ENCODE measurements at regions of chr7 and their contacts with region 1.

Region 1: GRCh38 chr7:69598081-69598486 is at the start of gene AUTS2:
- DNase-seq: peak; percentile 93 to 96 (median 94)
- H3K4me3 ChIP-seq: peak within 1 kb of the TSS; percentile 81
- H3K27ac ChIP-seq: peak within 1 kb of the TSS; percentile 92 to 95
- H3K4me1 ChIP-seq: peaks cover 6% of the 10 kb centered on the region
- H3K27me3 ChIP-seq: no peaks in the 10 kb centered on the region
- CTCF ChIP-seq: no peak
- EP300 ChIP-seq: no peak
- POLR2A ChIP-seq: no peak
- total RNA-seq, gene AUTS2: 35.4 to 60.9 (median 47.8) TPM

Region 2: DNA sequence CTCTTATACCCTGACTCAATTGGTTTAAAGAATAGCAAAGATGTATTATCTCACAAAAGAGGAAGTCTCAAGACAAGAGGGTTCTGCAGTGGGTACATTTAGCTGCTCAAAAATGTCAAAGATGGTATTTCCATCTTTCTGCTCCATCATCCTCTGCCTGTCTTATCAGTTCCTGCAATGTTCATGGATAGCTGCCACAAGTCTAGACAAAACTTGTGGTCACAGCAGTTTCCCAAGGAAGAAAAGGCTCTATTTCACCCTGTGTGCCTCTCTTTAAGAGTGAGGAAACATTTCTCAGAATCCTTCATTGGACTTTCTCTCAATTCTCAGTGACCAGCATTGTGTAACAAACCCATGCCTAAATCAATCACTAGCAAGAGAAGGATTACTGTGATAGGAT is 634.0 kb before region 1 on chr7:
- intact Hi-C with region 1: no loop called
- DNase-seq: no peak
- H3K4me3 ChIP-seq: no peak overlapping the region
- H3K27ac ChIP-seq: no peak overlapping the region
- H3K4me1 ChIP-seq: no peaks in the 10 kb centered on the region
- H3K27me3 ChIP-seq: no peaks in the 10 kb centered on the region
- CTCF ChIP-seq: no peak
- EP300 ChIP-seq: no peak
- POLR2A ChIP-seq: no peak

Region 3: DNA sequence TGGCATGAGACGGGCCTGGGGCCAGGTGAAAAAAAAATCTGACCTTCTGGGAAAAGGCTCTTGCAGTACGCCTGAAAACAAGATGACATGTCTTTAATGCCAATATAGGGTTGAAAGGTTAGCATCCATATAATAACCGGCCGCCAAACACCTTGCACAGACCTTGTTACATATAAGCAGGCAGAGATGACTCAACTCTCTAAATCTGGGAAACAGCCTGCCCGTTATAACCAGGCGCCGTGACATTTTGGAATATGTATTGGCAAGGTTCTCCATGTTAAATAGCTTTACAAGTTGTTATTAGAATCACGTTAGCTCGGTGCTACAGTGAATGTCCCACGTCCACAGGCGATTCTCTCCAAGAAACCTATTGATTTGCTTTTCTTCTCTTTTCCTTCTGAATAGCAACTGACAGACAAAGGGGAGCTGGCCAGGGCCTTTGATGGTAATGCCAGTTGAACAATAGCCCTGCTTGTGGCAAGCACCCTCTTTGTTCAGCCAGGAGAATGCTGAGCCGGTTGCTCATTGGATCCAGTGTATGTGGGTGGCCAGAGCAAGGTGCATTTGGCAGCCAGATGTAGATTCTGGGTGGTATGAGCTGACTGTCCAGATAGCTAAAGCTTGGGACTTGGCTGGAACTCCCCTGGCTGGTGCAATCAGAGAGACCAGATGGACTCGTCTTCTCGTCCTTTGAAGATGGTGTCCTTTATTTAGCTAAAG is 79.9 kb before region 1 on chr7:
- intact Hi-C with region 1: no loop called
- DNase-seq: no peak
- H3K4me3 ChIP-seq: no peak overlapping the region
- H3K27ac ChIP-seq: no peak overlapping the region
- H3K4me1 ChIP-seq: no peaks in the 10 kb centered on the region
- H3K27me3 ChIP-seq: no peaks in the 10 kb centered on the region
- CTCF ChIP-seq: no peak
- EP300 ChIP-seq: no peak
- POLR2A ChIP-seq: no peak

Region 4: GRCh38 chr7:69732222-69732621 is 134.1 kb after region 1 on chr7:
- intact Hi-C with region 1: no loop called
- DNase-seq: no peak
- H3K4me3 ChIP-seq: no peak overlapping the region
- H3K27ac ChIP-seq: no peak overlapping the region
- H3K4me1 ChIP-seq: peaks cover 6% of the 10 kb centered on the region
- H3K27me3 ChIP-seq: no peaks in the 10 kb centered on the region
- CTCF ChIP-seq: no peak
- EP300 ChIP-seq: no peak
- POLR2A ChIP-seq: no peak

Region 5: DNA sequence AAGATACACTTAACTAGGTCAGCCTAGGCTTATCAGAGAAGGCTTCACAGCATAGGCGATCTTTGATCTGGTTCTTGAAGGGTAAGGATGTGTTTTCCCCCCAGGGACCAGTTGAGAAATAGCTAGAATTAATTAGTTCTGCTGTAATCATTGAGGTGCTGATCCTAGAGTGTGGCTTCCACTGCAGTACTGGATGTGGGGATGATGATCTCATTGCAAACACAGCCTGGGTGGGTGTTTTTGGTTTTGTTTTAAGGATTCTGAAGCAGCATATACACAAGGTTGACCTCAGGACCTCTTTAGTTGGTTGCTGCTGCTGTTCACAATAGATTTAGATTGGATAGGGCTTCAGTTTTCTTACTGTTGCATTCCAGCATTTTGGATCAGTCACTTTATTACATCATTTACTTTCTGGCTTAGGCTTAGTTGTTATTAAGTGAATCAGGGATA is 159.9 kb after region 1 on chr7:
- intact Hi-C with region 1: loop called in 1 of 4 experiments (anchors 10 kb)
- DNase-seq: no peak
- H3K4me3 ChIP-seq: no peak overlapping the region
- H3K27ac ChIP-seq: no peak overlapping the region
- H3K4me1 ChIP-seq: peaks cover 10% of the 10 kb centered on the region
- H3K27me3 ChIP-seq: no peaks in the 10 kb centered on the region
- CTCF ChIP-seq: no peak
- EP300 ChIP-seq: no peak
- POLR2A ChIP-seq: no peak

Region 6: GRCh38 chr7:70693686-70694360 is 1095.7 kb after region 1 on chr7:
- intact Hi-C with region 1: loop called in 1 of 4 experiments (anchors 10 kb)
- DNase-seq: peak; percentile 67 to 78 (median 76)
- H3K4me3 ChIP-seq: peak overlapping the region; percentile 58
- H3K27ac ChIP-seq: peak overlapping the region; percentile 73 to 88
- H3K4me1 ChIP-seq: peaks cover 3% of the 10 kb centered on the region
- H3K27me3 ChIP-seq: no peaks in the 10 kb centered on the region
- CTCF ChIP-seq: peak in 1 of 3 donors; percentile 39
- EP300 ChIP-seq: no peak
- POLR2A ChIP-seq: no peak